Prostate gland (tissue), 2 donors: ENCODE measurements at regions of chr14 and their contacts with region 1.

Region 1: DNA sequence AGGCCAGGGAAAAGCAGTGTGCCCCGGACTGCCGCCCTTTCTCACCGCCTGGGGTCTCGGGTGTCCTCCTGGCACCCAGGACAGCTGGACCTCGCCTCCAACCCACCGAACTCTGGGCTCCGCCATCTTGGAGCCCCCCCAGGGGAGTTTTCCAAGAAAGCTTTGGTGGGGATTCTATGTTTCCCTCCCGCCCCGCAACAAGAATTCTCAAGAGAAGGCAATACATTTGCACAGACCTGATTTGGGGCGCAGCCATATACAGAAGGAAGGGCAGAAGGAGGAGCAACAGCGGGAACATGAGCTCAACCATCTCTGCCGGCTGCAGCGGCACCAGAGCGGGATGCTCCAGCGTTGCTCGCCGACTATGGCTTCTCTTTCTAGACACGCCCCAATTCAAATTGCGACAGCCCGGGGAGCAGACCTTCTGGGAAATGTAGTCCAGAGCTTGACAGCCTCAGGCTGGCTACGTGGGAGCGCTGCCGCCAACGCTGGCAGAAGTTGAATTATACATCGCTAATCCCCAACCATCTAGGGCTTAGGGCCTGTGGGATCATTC is at the start of gene RDH11:
- DNase-seq: peak; percentile 93
- H3K4me3 ChIP-seq: peak within 1 kb of the TSS; percentile 68 to 71
- H3K27ac ChIP-seq: peak within 1 kb of the TSS; percentile 84 to 92
- H3K4me1 ChIP-seq: peaks cover 10% of the 10 kb centered on the region
- H3K27me3 ChIP-seq: no peaks in the 10 kb centered on the region
- CTCF ChIP-seq: no peak
- POLR2A ChIP-seq: peak; percentile 89
- total RNA-seq, gene RDH11: 134 to 2,107 TPM

Region 2: GRCh38 chr14:67435615-67436346 is 259.7 kb before region 1 on chr14:
- intact Hi-C with region 1: loop called (anchors 10 kb)
- DNase-seq: no peak
- H3K4me3 ChIP-seq: no peak overlapping the region
- H3K27ac ChIP-seq: no peak overlapping the region
- H3K4me1 ChIP-seq: peaks cover 6% of the 10 kb centered on the region
- H3K27me3 ChIP-seq: no peaks in the 10 kb centered on the region
- CTCF ChIP-seq: no peak
- POLR2A ChIP-seq: no peak

Region 3: DNA sequence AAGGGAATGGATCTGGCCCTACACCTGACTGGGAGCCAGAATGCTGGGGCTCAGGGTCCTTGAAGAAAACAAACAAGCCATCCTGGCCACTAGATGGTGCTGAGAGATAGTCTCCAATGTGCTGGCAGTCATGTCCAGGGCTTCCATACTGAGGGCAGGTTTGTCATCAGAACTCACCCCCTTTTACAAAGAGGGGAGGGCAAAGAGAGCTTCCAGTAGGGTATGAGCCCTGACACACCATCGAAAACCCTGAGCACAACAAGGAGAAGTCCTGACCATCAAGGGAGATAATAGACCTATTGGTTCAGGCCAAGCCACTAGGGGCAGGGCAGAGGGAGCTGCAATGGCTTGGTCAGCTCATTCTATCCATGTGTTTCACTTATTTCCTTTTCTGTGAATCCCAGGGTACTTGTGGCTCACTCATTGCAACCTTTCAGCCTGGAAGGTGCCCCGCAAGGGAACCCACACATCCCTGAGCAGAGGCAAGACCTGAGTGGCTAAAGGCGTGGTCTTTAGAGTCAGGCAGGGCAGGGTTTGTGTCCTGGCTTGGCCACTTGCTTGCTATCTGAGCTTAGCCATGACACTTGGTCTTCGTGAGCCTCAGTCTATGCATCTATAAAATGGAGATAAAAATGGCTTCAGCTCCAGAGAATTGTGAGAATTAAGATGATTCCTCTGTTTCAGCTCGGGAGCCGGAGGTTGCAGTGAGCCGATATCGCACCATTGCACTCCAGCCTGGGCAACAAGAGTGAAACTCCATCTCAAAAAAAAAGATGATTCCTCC is 168.6 kb before region 1 on chr14:
- intact Hi-C with region 1: no loop called
- DNase-seq: peak; percentile 39
- H3K4me3 ChIP-seq: no peak overlapping the region
- H3K27ac ChIP-seq: no peak overlapping the region
- H3K4me1 ChIP-seq: peaks cover 5% of the 10 kb centered on the region
- H3K27me3 ChIP-seq: no peaks in the 10 kb centered on the region
- CTCF ChIP-seq: peak; percentile 26 to 69 (median 62)
- POLR2A ChIP-seq: no peak

Region 4: DNA sequence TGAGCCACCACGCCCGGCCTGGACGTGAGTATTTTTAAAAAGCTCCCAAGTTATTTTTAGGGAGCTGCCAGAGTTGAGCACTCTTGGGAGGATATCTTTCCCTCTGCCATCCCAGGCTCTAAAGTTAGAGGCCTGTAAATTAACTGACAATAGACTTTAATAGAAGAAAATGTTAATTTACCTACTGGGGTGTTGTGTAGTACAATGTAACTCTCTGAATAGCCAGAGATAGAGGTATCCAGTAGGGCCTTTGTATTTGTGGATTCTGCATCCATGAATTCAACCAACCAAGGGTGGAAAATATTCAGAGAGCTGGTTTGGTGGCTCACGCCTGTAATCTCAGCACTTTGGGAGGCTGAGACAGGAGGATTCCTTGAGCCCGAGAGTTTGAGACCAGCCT is 87.8 kb before region 1 on chr14:
- intact Hi-C with region 1: no loop called
- DNase-seq: no peak
- H3K4me3 ChIP-seq: no peak overlapping the region
- H3K27ac ChIP-seq: no peak overlapping the region
- H3K4me1 ChIP-seq: no peaks in the 10 kb centered on the region
- H3K27me3 ChIP-seq: no peaks in the 10 kb centered on the region
- CTCF ChIP-seq: no peak
- POLR2A ChIP-seq: no peak

Region 5: DNA sequence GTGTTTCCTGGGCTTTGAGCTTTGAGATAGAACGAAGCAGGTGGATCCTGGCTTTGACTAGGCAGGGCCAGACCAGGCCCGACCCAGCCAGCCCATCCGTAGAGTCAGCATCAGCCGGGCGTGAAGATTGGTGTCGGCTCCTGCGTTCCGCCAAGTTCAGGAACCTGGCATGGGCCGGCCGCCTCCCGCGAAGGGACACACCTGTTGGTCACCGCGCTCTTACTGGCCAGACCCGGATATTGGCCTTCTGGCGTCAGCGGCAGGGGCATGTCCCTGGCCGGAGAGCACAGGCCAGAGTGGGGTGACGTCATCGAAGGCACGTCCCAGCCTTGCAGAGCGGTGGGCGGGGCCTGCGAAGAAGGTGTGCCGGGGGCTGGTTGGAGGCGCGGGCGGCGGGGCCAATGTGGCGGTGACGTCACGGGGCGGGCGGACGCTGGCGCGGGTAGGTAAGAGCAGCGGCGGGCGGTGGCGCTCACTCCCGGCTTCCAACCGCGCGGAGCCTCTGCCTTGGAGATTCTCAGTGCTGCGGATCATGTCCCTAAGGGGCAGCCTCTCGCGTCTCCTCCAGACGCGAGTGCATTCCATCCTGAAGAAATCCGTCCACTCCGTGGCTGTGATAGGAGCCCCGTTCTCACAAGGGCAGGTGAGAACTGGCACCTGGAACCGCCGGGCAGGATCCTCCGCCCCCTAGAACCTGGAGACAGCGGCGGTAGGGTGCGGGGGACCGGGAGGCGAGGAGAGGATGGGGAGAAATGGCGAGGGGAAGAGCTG is 75.8 kb before region 1 on chr14 and contains the start of gene ARG2:
- intact Hi-C with region 1: loop called (anchors 5 kb)
- DNase-seq: peak; percentile 100
- H3K4me3 ChIP-seq: peak within 1 kb of the TSS; percentile 63 to 65
- H3K27ac ChIP-seq: peak within 1 kb of the TSS; percentile 86 to 89
- H3K4me1 ChIP-seq: peaks cover 5% of the 10 kb centered on the region
- H3K27me3 ChIP-seq: no peaks in the 10 kb centered on the region
- CTCF ChIP-seq: peak in 2 of 4 experiments; percentile 30 to 39
- POLR2A ChIP-seq: peak; percentile 92
- total RNA-seq, gene ARG2: 31.9 to 565 TPM